Activated CD4-positive, alpha-beta memory T cell treated with anti-CD3 and anti-CD28 coated beads for 36 hours (primary cell): ENCODE measurements at regions of chr7 and their contacts with region 1.

Region 1: DNA sequence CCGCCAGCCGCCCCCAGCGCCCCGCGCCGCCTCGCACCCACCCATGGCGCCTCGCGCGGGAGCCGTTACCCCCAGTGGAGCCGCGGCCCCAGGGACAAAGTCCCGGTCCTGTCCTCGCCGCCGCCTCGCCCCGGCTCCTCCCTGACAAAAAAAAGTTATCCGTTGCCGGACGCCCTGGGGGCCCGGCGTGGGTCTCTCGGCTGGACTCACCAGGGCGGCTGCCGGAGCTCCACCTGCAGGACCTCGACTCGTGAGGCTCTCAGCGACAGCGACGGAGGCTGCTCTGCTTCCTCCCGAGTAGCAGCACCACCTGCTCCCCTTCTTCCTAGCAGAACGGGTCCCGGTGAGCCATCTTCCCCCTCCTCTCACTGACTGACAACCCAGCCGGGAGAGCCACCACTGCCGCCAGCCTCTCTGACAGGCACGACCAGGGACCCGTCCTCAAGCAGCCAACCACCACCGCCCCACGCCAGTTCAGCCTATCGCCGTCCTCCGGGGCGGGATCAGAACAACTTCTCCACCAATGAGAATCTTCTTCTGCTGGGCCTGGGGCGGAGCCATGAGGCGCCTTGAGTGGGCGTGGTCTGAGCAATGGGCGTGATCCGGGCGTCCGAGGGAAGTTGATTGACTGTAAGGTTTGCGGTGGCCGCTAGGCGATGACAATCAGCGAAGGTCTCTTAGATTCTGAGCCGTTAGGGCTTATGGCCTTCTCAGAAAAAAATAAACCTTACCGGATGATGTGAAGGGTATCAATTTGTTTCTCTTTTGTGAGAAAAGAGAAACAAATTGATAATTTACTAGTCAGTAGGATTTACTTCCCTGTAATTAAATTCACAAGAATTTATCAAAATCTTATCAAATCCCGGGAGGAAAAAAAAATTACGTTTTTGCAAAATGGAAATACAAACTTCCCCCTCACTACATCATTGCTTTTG is at the start of gene HYCC1:
- DNase-seq: peak; percentile 100
- H3K4me3 Mint-ChIP-seq: peak within 1 kb of the TSS; percentile 94
- H3K27ac Mint-ChIP-seq: peak within 1 kb of the TSS; percentile 80
- H3K4me1 Mint-ChIP-seq: peaks cover 17% of the 10 kb centered on the region
- H3K27me3 Mint-ChIP-seq: no peaks in the 10 kb centered on the region
- total RNA-seq, gene HYCC1: 20.7 to 23.9 TPM

Region 2: DNA sequence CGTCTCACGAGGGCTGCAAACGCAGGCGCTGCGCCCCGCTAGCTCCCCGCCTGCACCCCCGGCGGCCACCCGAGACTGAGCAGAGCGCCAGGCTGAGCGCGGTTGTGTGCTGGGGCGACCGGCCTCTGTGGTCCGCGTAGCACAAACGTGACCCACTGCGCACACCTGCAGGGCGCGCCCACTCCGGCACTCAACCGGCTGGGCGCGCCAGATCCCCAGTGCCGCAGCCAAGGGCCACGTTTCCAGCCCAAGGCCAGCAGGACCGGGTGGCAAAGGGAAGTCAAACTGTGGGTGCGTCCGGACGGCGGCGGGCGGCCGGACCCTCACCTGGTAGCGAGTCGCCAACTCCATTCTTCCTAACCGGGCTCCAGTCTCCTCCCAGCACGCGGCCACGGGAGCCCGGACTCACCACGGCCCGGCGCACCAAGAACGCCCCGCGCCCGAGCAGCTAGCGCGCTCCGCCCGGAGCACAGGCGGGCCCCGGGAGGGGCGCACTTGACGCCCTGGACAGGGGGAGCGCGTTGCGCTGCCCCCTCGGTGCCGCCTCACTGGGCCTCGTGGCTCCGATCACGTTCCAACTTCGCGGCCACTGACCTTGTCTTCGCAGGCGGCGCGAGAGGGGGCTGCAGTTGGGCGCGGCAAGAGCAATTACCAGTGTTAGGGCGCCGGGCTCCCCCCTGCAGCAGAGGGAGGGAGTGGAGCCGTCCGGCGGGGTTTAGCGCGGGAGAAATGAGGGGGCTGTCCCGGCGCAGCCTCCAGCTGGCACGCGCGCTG is 1068.3 kb before region 1 on chr7 and contains the start of gene CDCA7L:
- CTCF ChIA-PET with region 1: no interaction called
- POLR2A ChIA-PET with region 1: no interaction called
- intact Hi-C with region 1: loop called (anchors 10 kb)
- DNase-seq: peak; percentile 81
- H3K4me3 Mint-ChIP-seq: peak within 1 kb of the TSS; percentile 87
- H3K27ac Mint-ChIP-seq: peak within 1 kb of the TSS; percentile 73
- H3K4me1 Mint-ChIP-seq: peaks cover 54% of the 10 kb centered on the region
- H3K27me3 Mint-ChIP-seq: peaks cover 7% of the 10 kb centered on the region
- total RNA-seq, gene CDCA7L: 62.5 to 70.4 TPM

Region 3: GRCh38 chr7:22822486-22823141 is 191.4 kb before region 1 on chr7 and contains the start of gene TOMM7:
- CTCF ChIA-PET with region 1: no interaction called
- POLR2A ChIA-PET with region 1: interaction called, 3 read pairs
- intact Hi-C with region 1: loop called (anchors 1 kb)
- DNase-seq: peak; percentile 92
- H3K4me3 Mint-ChIP-seq: peak within 1 kb of the TSS; percentile 96
- H3K27ac Mint-ChIP-seq: peak within 1 kb of the TSS; percentile 90
- H3K4me1 Mint-ChIP-seq: peaks cover 34% of the 10 kb centered on the region
- H3K27me3 Mint-ChIP-seq: peaks cover 11% of the 10 kb centered on the region
- total RNA-seq, gene TOMM7: 277 to 279 TPM

Region 4: GRCh38 chr7:22860784-22861482 is 153.0 kb before region 1 on chr7:
- CTCF ChIA-PET with region 1: no interaction called
- POLR2A ChIA-PET with region 1: no interaction called
- intact Hi-C with region 1: loop called (anchors 1 kb)
- DNase-seq: peak; percentile 29
- H3K4me3 Mint-ChIP-seq: no peak overlapping the region
- H3K27ac Mint-ChIP-seq: no peak overlapping the region
- H3K4me1 Mint-ChIP-seq: peaks cover 37% of the 10 kb centered on the region
- H3K27me3 Mint-ChIP-seq: no peaks in the 10 kb centered on the region

Region 5: DNA sequence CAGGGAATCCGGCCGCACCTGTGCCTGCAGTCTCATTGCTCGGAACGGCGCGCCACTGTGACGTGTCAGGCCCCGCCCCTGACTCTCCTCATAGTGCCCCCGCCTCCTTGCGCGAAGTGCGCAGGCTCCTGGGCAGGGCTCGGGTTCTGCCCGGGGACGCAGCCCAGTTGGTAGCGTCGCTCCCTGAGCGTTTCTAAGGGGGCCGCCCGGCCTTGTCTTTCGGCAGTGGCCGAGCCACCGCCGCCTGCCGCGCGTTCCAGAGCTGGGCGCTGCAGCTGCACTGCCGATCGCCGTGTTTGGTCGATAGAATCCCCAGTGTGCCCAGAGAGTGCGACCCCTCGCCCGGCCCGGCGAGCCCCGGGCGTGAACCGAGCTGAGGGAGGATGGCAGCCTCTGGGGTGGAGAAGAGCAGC is 91.7 kb after region 1 on chr7 and contains the start of gene KLHL7:
- CTCF ChIA-PET with region 1: no interaction called
- POLR2A ChIA-PET with region 1: no interaction called
- intact Hi-C with region 1: loop called (anchors 2 kb)
- DNase-seq: peak; percentile 97
- H3K4me3 Mint-ChIP-seq: peak within 1 kb of the TSS; percentile 98
- H3K27ac Mint-ChIP-seq: peak within 1 kb of the TSS; percentile 88
- H3K4me1 Mint-ChIP-seq: peaks cover 41% of the 10 kb centered on the region
- H3K27me3 Mint-ChIP-seq: no peaks in the 10 kb centered on the region
- total RNA-seq, gene KLHL7: 24.3 to 24.8 TPM

Region 6: DNA sequence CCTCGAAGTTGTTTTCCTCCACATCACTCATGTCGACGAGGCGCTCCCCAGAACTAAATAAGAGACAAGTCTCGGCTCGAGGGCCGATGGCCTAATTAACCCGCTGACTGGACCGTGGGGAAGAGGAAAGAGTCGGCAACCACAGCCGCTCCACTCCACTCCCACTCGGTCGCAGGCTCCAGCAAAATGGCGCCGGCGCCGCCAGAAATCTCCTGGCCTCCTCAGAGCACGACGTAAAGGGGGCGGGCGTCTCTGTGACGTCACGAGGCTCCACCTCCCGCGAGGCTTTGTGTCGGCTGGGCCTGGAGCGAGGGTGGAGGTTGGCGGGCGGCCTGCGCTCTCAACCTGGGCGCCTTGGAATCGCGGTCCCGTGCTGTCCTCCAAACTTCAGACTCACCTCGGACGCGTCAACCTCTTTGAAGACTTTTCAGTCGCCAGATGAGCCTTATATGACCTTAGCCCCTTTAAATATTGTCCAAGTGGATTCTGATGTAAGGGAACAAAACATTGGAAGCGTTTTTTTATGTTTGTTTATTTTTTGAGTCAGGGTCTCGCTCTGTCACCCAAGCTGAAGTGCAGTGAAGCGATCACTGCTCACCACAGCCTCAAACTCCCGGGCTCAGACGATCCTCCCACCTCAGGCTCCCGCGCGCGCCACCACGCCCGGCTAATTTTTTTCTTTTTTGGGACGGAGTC is 518.0 kb after region 1 on chr7 and contains the start of gene TRA2A:
- CTCF ChIA-PET with region 1: no interaction called
- POLR2A ChIA-PET with region 1: no interaction called
- intact Hi-C with region 1: loop called (anchors 1 kb)
- DNase-seq: peak; percentile 98
- H3K4me3 Mint-ChIP-seq: peak within 1 kb of the TSS; percentile 100
- H3K27ac Mint-ChIP-seq: peak within 1 kb of the TSS; percentile 100
- H3K4me1 Mint-ChIP-seq: peaks cover 38% of the 10 kb centered on the region
- H3K27me3 Mint-ChIP-seq: no peaks in the 10 kb centered on the region
- total RNA-seq, gene TRA2A: 75.4 to 77.8 TPM